Naive thymus-derived CD8-positive, alpha-beta T cell (primary cell): ENCODE measurements at regions of chr19 and their contacts with region 1.

Region 1: DNA sequence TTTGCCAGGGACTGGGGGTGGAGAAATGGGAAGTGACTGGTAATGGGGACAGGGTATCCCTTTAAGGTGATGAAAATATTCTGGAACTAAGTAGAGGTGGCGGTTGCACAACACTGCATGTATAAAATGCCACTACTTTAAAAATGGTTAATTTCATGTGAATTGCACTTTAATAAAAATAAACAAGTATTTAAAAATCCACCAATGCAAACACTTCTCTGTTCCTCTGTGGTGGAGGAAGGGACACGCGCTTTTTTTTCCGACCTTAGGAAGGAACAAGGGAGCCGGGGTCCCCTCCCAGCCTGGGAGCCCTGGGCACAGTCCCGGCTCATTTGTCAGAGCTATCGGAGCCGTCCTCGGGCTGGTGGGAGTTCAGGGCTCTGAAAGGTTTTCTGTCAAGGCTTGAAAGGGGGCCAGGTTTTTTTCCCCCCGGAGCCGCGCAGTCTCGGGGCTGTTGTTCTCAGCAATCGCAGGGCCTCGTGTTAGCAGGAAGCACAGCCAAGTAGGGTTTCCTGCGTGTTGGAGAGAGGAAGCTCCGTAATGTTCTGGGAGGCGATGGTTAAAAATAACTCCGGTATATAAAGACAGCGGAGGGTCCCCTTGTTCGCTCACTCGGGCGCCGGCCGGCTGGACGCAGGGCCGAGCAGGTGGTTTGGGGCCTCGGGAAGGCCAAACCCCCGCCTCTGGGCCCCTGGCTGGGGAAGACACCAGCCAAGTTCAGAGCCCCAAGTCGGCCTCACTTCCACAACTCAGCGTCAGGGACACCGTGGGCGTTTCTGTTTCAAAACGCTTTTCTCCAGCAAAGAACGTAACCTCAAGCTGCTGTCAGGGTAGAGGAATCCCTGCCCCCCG is 41.2 kb upstream of the KLF2 start:
- DNase-seq: peak; percentile 27 to 79 (median 64)
- ATAC-seq: peak; percentile 85 to 88
- H3K4me3 Mint-ChIP-seq: peak overlapping the region; percentile 57 to 87 (median 76)
- H3K27ac Mint-ChIP-seq: peak overlapping the region; percentile 59 to 97 (median 92)
- H3K4me1 Mint-ChIP-seq: peaks cover 21 to 60% (median 44%) of the 10 kb centered on the region in 4 donors
- H3K27me3 Mint-ChIP-seq: peaks cover 0 to 12% (median 2%) of the 10 kb centered on the region in 5 donors

Region 2: DNA sequence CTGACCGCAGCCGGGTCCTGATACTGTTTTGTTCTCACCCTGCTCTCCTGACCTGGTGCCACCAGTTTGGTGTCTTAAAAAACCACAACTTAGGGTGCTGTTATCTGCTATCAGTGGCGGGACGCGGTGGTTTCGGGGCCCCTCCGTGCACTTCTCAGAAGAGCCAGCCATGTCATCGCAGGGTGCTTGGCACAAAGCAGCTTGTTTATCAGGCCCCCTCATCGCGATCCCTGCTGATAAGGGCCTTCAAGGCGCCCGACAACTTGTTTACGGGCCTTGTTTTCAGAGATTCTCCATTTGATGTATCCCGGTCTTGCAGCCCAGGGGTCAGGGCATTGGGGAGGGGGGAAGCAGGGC is 16.9 kb before region 1 on chr19:
- POLR2A ChIA-PET with region 1: interaction called, 10 read pairs
- DNase-seq: peak; percentile 37 to 78 (median 60)
- ATAC-seq: peak; percentile 72 to 76
- H3K4me3 Mint-ChIP-seq: peak overlapping the region; percentile 34 to 86 (median 68)
- H3K27ac Mint-ChIP-seq: peak overlapping the region; percentile 81 to 97 (median 88)
- H3K4me1 Mint-ChIP-seq: peaks cover 26 to 72% (median 60%) of the 10 kb centered on the region in 4 donors
- H3K27me3 Mint-ChIP-seq: no peaks in the 10 kb centered on the region

Region 3: GRCh38 chr19:16412596-16413355 is 129.3 kb after region 1 on chr19:
- POLR2A ChIA-PET with region 1: no interaction called
- DNase-seq: no peak
- ATAC-seq: no peak
- H3K4me3 Mint-ChIP-seq: no peak overlapping the region
- H3K27ac Mint-ChIP-seq: no peak overlapping the region
- H3K4me1 Mint-ChIP-seq: peaks cover 3 to 20% (median 6%) of the 10 kb centered on the region in 4 donors
- H3K27me3 Mint-ChIP-seq: no peaks in the 10 kb centered on the region